MCF 10A (cell line): ENCODE measurements at regions of chr2 and their contacts with region 1.

Region 1: GRCh38 chr2:219155054-219155644 is 5.5 kb downstream of the NHEJ1 start:
- DNase-seq: peak; percentile 89
- H3K4me3 Mint-ChIP-seq: no peak overlapping the region
- H3K27ac Mint-ChIP-seq: no peak overlapping the region
- H3K4me1 Mint-ChIP-seq: peaks cover 7% of the 10 kb centered on the region
- H3K27me3 Mint-ChIP-seq: no peaks in the 10 kb centered on the region
- CTCF ChIP-seq: peak; percentile 43

Region 2: DNA sequence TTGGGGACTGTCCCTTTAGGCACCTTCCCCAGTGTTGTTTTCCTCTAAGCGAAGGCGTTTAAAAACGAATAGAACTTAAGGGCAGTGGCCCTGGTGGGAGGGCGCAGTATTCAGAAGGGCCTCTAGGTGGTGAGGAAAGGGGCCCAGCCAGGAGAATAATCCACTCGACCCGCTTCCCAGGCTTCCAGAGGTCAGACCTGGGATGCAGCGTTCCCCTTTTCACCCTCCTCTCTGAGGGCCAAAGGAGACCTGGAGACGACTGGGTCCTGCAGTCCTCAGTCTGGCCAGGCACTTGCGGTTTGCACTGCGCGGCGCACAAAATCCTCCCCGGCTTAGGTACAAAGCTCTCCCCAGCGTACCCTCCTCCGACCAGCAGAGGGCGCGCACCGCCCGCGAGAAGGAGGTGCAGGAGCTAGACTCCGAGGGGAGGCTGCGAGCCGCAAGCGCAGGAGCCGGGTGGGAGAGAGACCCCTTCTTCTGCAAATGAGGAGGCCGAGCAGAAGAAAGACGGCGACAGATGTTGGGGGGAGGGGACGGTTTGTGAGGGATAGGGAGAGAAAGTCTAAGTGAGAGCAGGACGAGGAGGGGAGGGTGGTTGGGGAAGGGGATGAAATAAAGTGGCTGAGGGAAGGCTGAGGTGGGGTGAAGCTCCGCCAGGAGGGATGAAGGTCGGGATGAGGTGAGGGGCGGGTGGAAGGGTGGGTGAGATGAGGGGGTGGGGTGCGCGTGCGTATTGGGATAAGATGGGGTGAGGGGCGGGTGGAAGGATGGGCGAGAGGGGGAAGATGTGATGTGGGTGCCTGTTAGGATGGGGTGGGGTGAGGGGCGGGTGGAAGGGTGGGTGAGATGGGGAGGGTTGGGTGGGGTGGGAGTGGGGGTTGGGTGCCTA is 175.1 kb before region 1 on chr2:
- CTCF ChIA-PET with region 1: interaction called, 19 read pairs
- POLR2A ChIA-PET with region 1: no interaction called
- intact Hi-C with region 1: no loop called
- DNase-seq: peak; percentile 78
- H3K4me3 Mint-ChIP-seq: peak overlapping the region; percentile 56
- H3K27ac Mint-ChIP-seq: no peak overlapping the region
- H3K4me1 Mint-ChIP-seq: peaks cover 15% of the 10 kb centered on the region
- H3K27me3 Mint-ChIP-seq: peaks cover 90% of the 10 kb centered on the region
- CTCF ChIP-seq: peak; percentile 89

Region 3: DNA sequence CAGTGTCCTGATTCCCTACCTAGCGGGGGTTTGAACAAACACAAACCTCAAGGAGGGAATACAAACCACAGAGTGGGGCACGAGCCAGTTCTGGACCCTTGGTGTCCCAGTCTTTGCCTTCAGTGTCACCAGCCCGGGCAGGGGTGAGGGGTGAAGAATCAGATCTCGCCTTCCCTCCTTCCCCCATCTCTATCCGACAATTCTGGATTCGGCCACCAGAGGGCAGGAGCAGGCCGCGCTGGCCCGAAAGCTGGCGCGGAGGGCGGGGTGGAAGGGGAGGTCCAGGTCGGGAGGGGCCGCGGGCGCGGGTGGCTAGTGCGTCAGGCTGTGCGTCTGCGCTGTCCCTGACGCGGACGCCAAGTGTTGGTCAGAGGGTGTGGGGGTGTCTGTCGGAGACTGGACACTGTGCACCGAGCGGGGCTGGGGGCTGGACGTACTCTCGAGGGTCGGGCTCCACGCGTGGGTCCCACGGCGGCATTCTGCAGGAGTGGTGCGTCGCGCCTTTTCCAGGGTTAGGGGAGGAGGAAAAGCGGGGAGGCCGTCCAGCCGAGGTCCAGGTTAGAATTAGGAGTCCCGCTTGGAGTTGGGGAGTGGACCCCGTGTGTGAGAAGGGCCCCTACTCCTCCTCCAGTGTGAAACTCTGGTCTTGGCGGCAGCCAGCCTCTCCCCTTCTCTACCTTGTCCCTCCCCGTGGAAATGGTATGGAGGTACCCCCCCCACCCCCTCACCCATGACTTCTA is 159.0 kb before region 1 on chr2:
- CTCF ChIA-PET with region 1: interaction called, 17 read pairs
- POLR2A ChIA-PET with region 1: no interaction called
- intact Hi-C with region 1: loop called (anchors 1 kb)
- DNase-seq: peak; percentile 82
- H3K4me3 Mint-ChIP-seq: peak overlapping the region; percentile 73
- H3K27ac Mint-ChIP-seq: no peak overlapping the region
- H3K4me1 Mint-ChIP-seq: peaks cover 15% of the 10 kb centered on the region
- H3K27me3 Mint-ChIP-seq: peaks cover 22% of the 10 kb centered on the region
- CTCF ChIP-seq: peak; percentile 84

Region 4: GRCh38 chr2:219010162-219010756 is 144.9 kb before region 1 on chr2:
- CTCF ChIA-PET with region 1: interaction called, 27 read pairs
- POLR2A ChIA-PET with region 1: no interaction called
- intact Hi-C with region 1: no loop called
- DNase-seq: peak; percentile 51
- H3K4me3 Mint-ChIP-seq: no peak overlapping the region
- H3K27ac Mint-ChIP-seq: no peak overlapping the region
- H3K4me1 Mint-ChIP-seq: no peaks in the 10 kb centered on the region
- H3K27me3 Mint-ChIP-seq: peaks cover 29% of the 10 kb centered on the region
- CTCF ChIP-seq: peak; percentile 50

Region 5: GRCh38 chr2:219057709-219058540 is 97.2 kb before region 1 on chr2:
- CTCF ChIA-PET with region 1: interaction called, 55 read pairs
- POLR2A ChIA-PET with region 1: interaction called, 5 read pairs
- intact Hi-C with region 1: loop called (anchors 1 kb)
- DNase-seq: peak; percentile 51
- H3K4me3 Mint-ChIP-seq: no peak overlapping the region
- H3K27ac Mint-ChIP-seq: no peak overlapping the region
- H3K4me1 Mint-ChIP-seq: no peaks in the 10 kb centered on the region
- H3K27me3 Mint-ChIP-seq: peaks cover 63% of the 10 kb centered on the region
- CTCF ChIP-seq: peak; percentile 95

Region 6: DNA sequence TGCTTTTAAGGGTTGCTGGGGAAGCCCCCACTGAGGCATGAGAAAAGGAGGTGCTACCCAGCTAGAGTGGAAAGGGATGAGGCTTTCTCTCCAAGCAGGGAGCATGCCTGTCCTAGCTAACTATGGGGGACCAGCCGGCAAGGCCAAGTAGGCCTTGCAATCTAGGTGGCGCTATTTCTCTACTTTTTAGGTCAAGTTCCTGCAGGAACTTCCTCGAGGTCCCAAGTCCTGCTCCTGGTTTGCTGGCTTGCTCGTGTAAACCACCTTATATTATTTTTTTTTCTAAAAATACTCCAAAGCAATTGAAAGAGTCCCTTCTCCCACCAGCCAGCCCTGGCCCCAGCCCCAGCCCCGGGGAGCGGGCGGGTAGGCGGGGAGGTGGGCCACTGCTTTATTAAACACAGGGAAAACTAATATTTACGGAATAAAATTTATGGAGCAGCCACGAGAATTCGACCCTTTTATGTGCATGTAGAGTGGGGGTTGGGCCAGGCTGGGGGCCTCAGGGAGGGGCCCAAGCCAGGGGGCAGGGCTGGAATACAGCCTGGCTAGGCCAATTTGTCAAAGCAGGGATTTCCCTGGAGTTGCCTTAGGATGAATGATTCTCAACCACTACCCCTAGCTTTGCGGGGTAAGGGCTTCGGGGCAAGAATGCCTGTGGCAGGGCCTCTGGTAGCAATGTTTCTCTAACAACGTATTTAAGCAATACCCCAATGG is 81.6 kb before region 1 on chr2:
- CTCF ChIA-PET with region 1: interaction called, 13 read pairs
- POLR2A ChIA-PET with region 1: interaction called, 4 read pairs
- intact Hi-C with region 1: loop called (anchors 1 kb)
- DNase-seq: peak; percentile 57
- H3K4me3 Mint-ChIP-seq: no peak overlapping the region
- H3K27ac Mint-ChIP-seq: peak overlapping the region; percentile 7
- H3K4me1 Mint-ChIP-seq: peaks cover 13% of the 10 kb centered on the region
- H3K27me3 Mint-ChIP-seq: no peaks in the 10 kb centered on the region
- CTCF ChIP-seq: peak; percentile 57

Region 7: GRCh38 chr2:219142329-219142728 is 12.8 kb before region 1 on chr2:
- CTCF ChIA-PET with region 1: interaction called, 13 read pairs
- POLR2A ChIA-PET with region 1: no interaction called
- intact Hi-C with region 1: no loop called
- DNase-seq: peak; percentile 88
- H3K4me3 Mint-ChIP-seq: no peak overlapping the region
- H3K27ac Mint-ChIP-seq: peak overlapping the region; percentile 44
- H3K4me1 Mint-ChIP-seq: peaks cover 27% of the 10 kb centered on the region
- H3K27me3 Mint-ChIP-seq: no peaks in the 10 kb centered on the region
- CTCF ChIP-seq: no peak